Endothelial cell of umbilical vein (primary cell): ENCODE measurements at regions of chr9 and their contacts with region 1.

Region 1: GRCh38 chr9:119370816-119371215 is 1.6 kb upstream of the BRINP1 start:
- DNase-seq: no peak
- H3K4me3 ChIP-seq: no peak overlapping the region
- H3K27ac ChIP-seq: no peak overlapping the region
- H3K4me1 ChIP-seq: no peaks in the 10 kb centered on the region
- H3K27me3 ChIP-seq: peaks cover 0 to 16% of the 10 kb centered on the region in 2 experiments
- CTCF ChIP-seq: no peak
- POLR2A ChIP-seq: no peak

Region 2: DNA sequence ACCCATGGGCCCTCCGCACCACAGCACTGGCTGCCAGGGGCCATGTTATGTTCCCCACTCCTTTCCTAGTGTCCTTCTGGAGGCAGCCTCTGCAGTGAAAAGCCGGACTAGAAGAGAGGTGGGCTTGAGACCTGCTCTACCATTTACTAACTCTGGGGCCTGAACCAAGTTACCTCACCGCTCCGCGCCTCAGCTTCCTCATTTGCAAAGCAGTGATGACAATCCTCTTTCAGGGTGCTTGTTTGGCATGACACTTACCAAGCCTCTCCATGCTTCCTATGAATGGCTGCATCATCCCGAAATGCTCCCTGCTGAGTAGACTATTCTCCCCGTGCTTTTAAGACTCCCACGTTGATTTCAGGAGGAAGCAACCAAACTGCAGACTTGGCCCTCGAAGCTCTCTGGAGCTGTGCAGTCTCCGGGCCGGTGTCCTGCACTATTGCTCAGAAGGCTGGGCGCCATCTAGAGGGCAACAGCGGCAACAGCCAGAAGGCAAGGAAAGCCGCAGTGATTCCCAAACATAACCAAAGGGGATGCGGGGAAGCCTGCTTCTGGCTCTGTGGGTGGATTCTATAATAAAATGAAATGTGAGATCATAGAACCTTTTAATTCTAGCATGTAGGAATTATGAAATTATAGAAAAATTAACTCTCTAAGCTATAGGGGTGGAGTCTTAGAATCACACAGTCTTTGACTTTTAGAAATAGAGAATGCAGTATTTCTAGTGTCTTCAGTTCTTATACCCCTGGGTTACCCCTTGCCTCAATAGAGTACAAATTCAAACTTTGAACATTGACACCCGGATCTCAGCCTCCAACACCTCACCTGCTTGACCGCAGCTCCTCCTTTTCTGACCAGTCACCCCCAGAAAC is 598.3 kb after region 1 on chr9:
- CTCF ChIA-PET with region 1: no interaction called
- POLR2A ChIA-PET with region 1: no interaction called
- dilution Hi-C with region 1: no loop called
- intact Hi-C with region 1: loop called (anchors 10 kb)
- DNase-seq: peak; percentile 40
- H3K4me3 ChIP-seq: no peak overlapping the region
- H3K27ac ChIP-seq: no peak overlapping the region
- H3K4me1 ChIP-seq: no peaks in the 10 kb centered on the region
- H3K27me3 ChIP-seq: no peaks in the 10 kb centered on the region
- CTCF ChIP-seq: peak; percentile 76 to 84
- POLR2A ChIP-seq: no peak